ENCODE measurements at regions of chr3 and their contacts with region 1.

Region 1: DNA sequence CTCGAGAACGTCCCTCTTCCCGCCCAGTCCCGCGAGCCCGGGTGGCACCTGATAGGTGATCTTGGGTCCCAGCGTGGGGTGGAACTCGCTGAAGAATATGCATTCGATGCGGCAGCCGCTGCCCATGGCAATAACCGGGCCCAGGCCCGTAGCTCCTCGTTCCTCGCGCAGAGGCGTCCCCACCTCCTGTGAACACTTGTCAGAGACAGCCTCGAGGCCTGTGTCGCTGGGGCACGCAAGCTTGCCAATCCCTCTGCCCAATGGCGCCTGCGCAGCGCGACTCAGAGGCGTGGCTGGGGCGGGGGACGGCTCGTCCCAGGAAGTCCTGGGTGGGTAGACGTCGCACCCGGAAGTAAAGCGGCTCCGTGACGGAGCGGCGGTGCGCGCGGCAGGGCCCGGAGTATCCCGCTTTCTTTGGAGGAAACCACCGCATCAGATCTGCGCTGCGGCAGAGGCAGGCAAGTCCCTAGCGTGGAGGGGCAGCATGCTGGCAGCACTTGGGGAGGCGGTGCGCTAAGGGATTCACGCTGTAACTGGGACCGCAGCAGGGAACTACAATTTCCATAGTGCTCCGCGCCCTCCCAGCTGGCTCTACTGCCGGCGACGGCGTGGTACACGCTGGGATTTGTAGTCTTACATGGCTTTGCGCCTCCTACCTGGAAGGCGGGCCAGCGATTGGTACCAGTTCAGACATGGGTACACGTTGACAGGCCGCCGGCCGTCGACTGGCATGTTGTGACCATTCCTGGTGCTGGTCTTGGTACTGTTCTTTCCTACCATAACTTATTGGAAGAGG is at the starts of genes CYB561D2 and NPRL2:
- DNase-seq: peak; percentile 97
- ATAC-seq: peak; percentile 88
- H3K4me3 ChIP-seq: peak within 1 kb of the TSS; percentile 84
- H3K27ac ChIP-seq: peak within 1 kb of the TSS; percentile 70
- H3K4me1 ChIP-seq: peaks cover 43% of the 10 kb centered on the region
- H3K27me3 ChIP-seq: no peaks in the 10 kb centered on the region
- CTCF ChIP-seq: no peak
- total RNA-seq, gene CYB561D2: 37.1 and 44.3 TPM in 2 replicates
- total RNA-seq, gene NPRL2: 40.9 and 56.9 TPM in 2 replicates

Region 2: GRCh38 chr3:50138266-50139200 is 212.2 kb before region 1 on chr3:
- CTCF ChIA-PET with region 1: interaction called, 10 read pairs
- POLR2A ChIA-PET with region 1: no interaction called
- intact Hi-C with region 1: no loop called
- DNase-seq: peak; percentile 36
- ATAC-seq: peak; percentile 55
- H3K4me3 ChIP-seq: peak overlapping the region; percentile 35; the same call in 1 of the 2 replicates
- H3K27ac ChIP-seq: no peak overlapping the region
- H3K4me1 ChIP-seq: peaks cover 11% of the 10 kb centered on the region
- H3K27me3 ChIP-seq: no peaks in the 10 kb centered on the region
- CTCF ChIP-seq: no peak

Region 3: GRCh38 chr3:50298836-50299637 is 51.7 kb before region 1 on chr3 and contains the starts of genes HYAL3 and NAA80:
- CTCF ChIA-PET with region 1: no interaction called
- POLR2A ChIA-PET with region 1: interaction called, 12 read pairs
- intact Hi-C with region 1: no loop called
- DNase-seq: peak; percentile 99
- ATAC-seq: peak; percentile 86
- H3K4me3 ChIP-seq: peak within 1 kb of the TSS; percentile 94
- H3K27ac ChIP-seq: peak within 1 kb of the TSS; percentile 90
- H3K4me1 ChIP-seq: peaks cover 20% of the 10 kb centered on the region
- H3K27me3 ChIP-seq: no peaks in the 10 kb centered on the region
- CTCF ChIP-seq: peak; percentile 36; the same call in 1 of the 2 replicates
- total RNA-seq, gene HYAL3: 13.2 and 20.8 TPM in 2 replicates
- total RNA-seq, gene NAA80: 8.7 and 16.6 TPM in 2 replicates

Region 4: DNA sequence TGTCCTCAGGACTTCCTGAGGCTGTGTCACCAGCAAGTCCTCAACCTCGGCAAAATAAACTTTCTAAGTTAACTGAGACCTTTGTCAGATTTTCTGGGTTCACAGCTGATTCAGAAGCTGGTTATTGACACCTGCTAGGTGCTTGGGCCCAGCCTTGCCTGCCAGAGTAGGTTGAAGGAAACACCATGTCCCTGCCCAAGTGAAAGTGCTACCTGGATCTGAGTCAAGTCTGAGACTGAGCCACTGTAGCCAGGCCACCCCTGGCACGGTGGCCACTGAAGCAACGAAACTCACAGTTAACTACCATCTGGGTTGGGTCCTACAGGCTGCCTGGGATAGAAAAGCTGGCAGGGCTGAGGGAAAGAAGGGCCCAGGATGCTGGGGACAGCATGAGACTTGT is 36.4 kb before region 1 on chr3:
- CTCF ChIA-PET with region 1: no interaction called
- POLR2A ChIA-PET with region 1: no interaction called
- intact Hi-C with region 1: no loop called
- DNase-seq: no peak
- ATAC-seq: no peak
- H3K4me3 ChIP-seq: no peak overlapping the region
- H3K27ac ChIP-seq: no peak overlapping the region
- H3K4me1 ChIP-seq: peaks cover 35% of the 10 kb centered on the region
- H3K27me3 ChIP-seq: no peaks in the 10 kb centered on the region
- CTCF ChIP-seq: no peak

Region 5: GRCh38 chr3:50474717-50475116 is 124.0 kb after region 1 on chr3:
- CTCF ChIA-PET with region 1: interaction called, 11 read pairs
- POLR2A ChIA-PET with region 1: no interaction called
- intact Hi-C with region 1: no loop called
- DNase-seq: peak; percentile 18
- ATAC-seq: peak; percentile 70
- H3K4me3 ChIP-seq: no peak overlapping the region
- H3K27ac ChIP-seq: no peak overlapping the region
- H3K4me1 ChIP-seq: no peaks in the 10 kb centered on the region
- H3K27me3 ChIP-seq: no peaks in the 10 kb centered on the region
- CTCF ChIP-seq: no peak

Region 6: DNA sequence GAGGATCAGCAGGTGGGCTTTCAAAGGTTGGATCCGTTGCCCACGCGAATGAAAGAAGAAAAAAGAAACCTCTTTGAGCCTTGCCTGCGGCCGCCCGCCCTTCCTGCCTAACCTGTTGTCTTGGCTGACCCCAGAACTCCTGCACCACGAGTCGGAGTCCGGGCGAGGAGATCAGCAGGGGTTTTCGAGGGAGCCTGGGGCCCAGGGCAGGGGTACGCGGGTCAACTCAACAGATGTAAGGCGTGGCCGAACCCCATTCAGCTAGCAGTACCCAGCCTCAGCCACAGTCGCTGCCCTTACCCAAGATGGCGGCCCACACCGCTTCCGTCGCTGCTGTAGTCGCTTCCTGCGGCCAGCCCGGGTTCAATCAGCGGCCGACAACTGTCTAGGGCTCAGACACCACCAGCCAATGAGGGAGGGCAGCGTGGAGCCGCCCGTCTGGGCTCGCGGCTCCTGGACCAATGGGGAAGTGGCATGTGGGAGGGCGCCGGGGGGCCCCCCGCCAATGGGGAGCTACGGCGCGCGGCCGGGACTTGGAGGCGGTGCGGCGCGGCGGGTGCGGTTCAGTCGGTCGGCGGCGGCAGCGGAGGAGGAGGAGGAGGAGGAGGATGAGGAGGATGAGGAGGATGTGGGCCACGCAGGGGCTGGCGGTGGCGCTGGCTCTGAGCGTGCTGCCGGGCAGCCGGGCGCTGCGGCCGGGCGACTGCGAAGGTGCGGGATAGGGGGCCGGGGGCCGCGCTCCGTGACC is 1034.2 kb after region 1 on chr3 and contains the start of gene MANF:
- CTCF ChIA-PET with region 1: no interaction called
- POLR2A ChIA-PET with region 1: no interaction called
- intact Hi-C with region 1: loop called (anchors 5 kb)
- DNase-seq: peak; percentile 98
- ATAC-seq: peak; percentile 91
- H3K4me3 ChIP-seq: peak within 1 kb of the TSS; percentile 85
- H3K27ac ChIP-seq: peak within 1 kb of the TSS; percentile 79
- H3K4me1 ChIP-seq: peaks cover 40% of the 10 kb centered on the region
- H3K27me3 ChIP-seq: no peaks in the 10 kb centered on the region
- CTCF ChIP-seq: no peak
- total RNA-seq, gene MANF: 200 and 221 TPM in 2 replicates

Measured in PC-3 (cell line).